ENCODE measurements at regions of chr13 and their contacts with region 1.

Region 1: DNA sequence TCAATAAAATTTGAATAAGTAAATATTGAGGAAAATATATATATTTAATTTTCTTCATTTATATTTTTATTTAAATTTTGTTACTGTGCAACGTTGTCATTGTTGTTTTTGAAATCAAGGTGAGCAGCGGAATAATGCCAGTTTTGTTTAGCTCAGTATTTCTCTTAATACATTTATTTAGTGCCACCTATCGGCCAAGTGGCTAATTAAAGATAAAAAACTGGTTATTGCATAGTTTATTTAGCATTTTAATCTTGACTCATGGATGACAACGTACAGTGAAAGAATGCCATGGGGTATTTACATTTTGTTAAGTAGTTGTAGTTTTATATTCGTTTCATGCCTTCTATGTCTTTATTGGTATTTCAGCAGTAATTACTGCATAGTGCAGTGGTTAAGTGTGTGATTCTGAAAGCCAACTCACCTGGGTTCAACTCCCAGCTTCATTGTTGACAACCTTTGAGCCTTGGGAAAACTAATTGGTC is 265.9 kb downstream of the MYO16 start:
- DNase-seq: no peak
- H3K4me3 ChIP-seq: no peak overlapping the region
- H3K27ac ChIP-seq: no peak overlapping the region
- H3K4me1 ChIP-seq: no peaks in the 10 kb centered on the region
- H3K27me3 ChIP-seq: peaks cover 5% of the 10 kb centered on the region
- CTCF ChIP-seq: peak; percentile 66

Region 2: DNA sequence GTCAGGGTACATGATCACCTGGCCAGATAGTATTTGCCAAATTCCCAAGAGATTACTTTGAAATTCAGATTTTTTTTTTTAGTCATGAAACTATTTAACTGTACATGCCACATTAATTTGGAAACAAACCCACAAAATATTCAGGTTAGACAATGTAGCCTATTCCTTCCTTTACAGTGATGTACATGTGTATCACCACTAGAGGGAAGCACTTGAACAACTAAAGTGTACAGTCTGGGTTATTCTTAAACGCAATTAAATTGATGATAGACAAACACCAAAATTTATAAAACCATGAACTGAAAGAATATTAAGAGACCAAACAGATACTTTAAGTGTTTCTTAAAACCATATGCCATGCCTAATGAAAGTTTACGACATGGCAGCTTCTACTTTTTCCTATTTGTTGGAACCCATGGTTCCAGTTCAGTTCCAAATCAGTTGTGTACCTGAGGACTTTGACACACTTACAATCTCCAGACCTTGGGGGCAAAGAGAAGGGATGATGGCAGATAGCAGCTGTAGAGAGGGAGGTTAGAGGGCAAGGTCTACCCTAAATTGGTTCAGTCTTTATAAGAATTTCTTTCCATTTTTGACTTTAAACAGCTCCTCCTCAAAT is 572.9 kb before region 1 on chr13:
- intact Hi-C with region 1: loop called (anchors 10 kb)
- DNase-seq: no peak
- H3K4me3 ChIP-seq: no peak overlapping the region
- H3K27ac ChIP-seq: no peak overlapping the region
- H3K4me1 ChIP-seq: no peaks in the 10 kb centered on the region
- H3K27me3 ChIP-seq: peaks cover 13% of the 10 kb centered on the region
- CTCF ChIP-seq: peak; percentile 85

Region 3: GRCh38 chr13:108610507-108610906 is 284.8 kb before region 1 on chr13:
- intact Hi-C with region 1: loop called (anchors 5 kb)
- DNase-seq: no peak
- H3K4me3 ChIP-seq: no peak overlapping the region
- H3K27ac ChIP-seq: peak overlapping the region; percentile 15
- H3K4me1 ChIP-seq: peaks cover 11% of the 10 kb centered on the region
- H3K27me3 ChIP-seq: no peaks in the 10 kb centered on the region
- CTCF ChIP-seq: no peak

Region 4: DNA sequence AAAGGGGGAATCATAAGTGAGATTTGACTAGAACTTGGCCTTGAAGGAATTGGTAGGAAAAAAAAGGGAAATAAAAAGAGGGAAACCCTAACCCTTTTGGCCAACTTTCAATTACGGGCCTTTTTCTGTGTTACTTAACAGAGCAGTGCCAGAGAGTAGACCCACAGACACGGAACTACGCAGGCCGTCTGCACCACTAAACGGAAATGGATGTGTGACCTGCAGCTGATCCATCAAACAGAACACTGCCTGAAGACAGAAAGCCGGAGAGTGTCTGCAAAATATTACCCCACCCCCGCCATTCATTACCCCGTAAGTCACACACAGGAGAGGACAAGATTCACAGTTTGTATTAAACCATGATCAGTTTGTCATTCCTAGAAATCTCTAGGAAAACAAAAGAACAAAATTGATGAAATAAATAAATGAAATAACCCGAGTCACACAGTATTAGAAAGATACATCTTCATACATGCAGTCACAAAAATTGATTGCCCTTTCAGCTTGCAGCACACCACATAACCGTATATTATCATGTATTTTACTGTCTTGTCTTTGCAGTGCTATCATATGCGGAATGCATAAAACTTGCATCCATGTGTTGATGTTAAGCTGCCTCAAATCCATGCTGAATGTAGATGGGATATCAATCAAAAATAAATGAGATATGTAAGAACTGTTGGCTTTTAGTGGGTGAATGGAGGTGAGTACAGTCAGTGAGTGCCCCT is 466.5 kb after region 1 on chr13:
- intact Hi-C with region 1: no loop called
- DNase-seq: no peak
- H3K4me3 ChIP-seq: no peak overlapping the region
- H3K27ac ChIP-seq: no peak overlapping the region
- H3K4me1 ChIP-seq: no peaks in the 10 kb centered on the region
- H3K27me3 ChIP-seq: no peaks in the 10 kb centered on the region
- CTCF ChIP-seq: no peak